ENCODE measurements at regions of chr9 and their contacts with region 1.

Region 1: GRCh38 chr9:76810377-76810957 is 46.2 kb downstream of the PCA3 start:
- DNase-seq: peak in 2 of 6 donors; percentile 4 to 54
- ATAC-seq: peak in 3 of 4 donors; percentile 85 to 87 (median 85)
- H3K4me3 ChIP-seq: no peak overlapping the region
- H3K27ac ChIP-seq: no peak overlapping the region
- H3K4me1 ChIP-seq: no peaks in the 10 kb centered on the region
- H3K27me3 ChIP-seq: peaks cover 0 to 3% (median 0%) of the 10 kb centered on the region in 4 donors
- CTCF ChIP-seq: peak; percentile 29 to 68 (median 58)

Region 2: GRCh38 chr9:76699971-76700370 is 110.5 kb before region 1 on chr9:
- intact Hi-C with region 1: no loop called
- DNase-seq: no peak
- ATAC-seq: no peak
- H3K4me3 ChIP-seq: no peak overlapping the region
- H3K27ac ChIP-seq: no peak overlapping the region
- H3K4me1 ChIP-seq: no peaks in the 10 kb centered on the region
- H3K27me3 ChIP-seq: peaks cover 0 to 3% (median 2%) of the 10 kb centered on the region in 4 donors
- CTCF ChIP-seq: no peak

Region 3: DNA sequence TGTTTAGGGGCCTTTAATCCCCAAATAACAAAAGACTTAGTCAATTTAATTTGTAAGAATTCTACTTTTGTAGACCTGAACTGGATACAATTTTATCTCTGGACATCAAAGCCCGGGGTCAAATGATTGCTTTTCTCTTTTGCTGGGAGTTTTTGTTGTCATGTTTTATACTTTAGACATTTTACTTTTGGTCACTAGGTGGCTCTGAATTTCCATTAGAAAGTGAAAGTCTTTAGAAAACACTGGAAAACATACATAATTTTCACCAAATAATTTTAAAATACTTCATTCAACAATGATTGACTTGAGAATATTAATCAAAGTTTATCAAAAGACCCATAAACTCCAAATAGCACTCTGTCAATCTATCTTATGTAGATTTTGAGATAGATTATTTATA is 49.0 kb before region 1 on chr9:
- intact Hi-C with region 1: no loop called
- DNase-seq: no peak
- ATAC-seq: no peak
- H3K4me3 ChIP-seq: no peak overlapping the region
- H3K27ac ChIP-seq: no peak overlapping the region
- H3K4me1 ChIP-seq: no peaks in the 10 kb centered on the region
- H3K27me3 ChIP-seq: no peaks in the 10 kb centered on the region
- CTCF ChIP-seq: no peak

Region 4: GRCh38 chr9:76873056-76873792 is 62.8 kb after region 1 on chr9:
- intact Hi-C with region 1: no loop called
- DNase-seq: no peak
- ATAC-seq: no peak
- H3K4me3 ChIP-seq: no peak overlapping the region
- H3K27ac ChIP-seq: no peak overlapping the region
- H3K4me1 ChIP-seq: no peaks in the 10 kb centered on the region
- H3K27me3 ChIP-seq: no peaks in the 10 kb centered on the region
- CTCF ChIP-seq: no peak

Region 5: DNA sequence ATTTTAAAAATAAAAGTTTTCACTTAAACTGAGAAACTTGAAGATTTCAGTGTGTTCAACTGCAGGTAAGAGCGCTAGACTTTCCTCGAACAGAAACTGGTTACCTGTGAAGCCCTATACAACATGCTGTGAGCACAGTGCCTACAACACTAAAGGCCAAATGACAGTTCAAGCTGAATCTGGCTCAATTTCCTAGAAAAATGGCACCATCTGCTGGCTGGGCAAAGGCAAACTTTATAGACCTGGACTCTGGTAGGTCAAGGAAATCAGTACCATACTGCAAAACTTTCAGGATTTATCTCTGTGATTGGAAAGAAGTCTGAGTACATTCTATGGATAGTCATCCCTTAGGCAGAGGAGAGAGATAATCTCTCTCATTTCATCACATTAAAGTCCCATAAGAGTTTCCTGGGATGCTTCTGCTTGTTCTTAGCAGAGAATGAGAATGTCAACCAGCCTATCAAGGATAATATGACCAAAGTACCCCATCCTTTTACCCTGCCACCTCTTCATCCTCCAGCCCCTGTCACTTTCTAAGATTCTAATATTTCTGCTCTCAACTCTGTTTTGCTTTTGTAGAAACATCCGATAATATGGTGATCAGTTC is 177.2 kb after region 1 on chr9:
- intact Hi-C with region 1: loop called in 1 of 3 experiments (anchors 5 kb)
- DNase-seq: peak in 1 of 6 donors; percentile 32
- ATAC-seq: peak in 3 of 4 donors; percentile 73 to 74 (median 74)
- H3K4me3 ChIP-seq: no peak overlapping the region
- H3K27ac ChIP-seq: no peak overlapping the region
- H3K4me1 ChIP-seq: no peaks in the 10 kb centered on the region
- H3K27me3 ChIP-seq: peaks cover 0 to 3% (median 0%) of the 10 kb centered on the region in 4 donors
- CTCF ChIP-seq: no peak

Region 6: DNA sequence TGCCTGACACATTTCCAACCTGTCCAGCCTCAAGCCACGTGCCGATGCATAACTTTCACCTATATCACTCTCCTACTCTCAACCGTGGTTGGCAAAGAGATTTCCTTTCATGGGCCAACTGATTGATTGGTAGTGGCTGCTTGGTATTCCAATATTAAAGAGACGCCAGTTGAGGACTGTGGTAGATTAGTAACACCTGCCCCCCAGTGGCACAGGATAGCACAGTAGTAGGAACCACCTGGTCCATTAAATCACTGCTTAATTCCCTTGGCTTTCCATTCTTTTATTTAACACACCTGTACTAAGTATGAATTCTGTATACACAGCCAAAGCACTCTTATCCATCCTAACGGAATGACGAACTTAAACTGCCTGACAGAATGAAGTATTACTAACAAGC is 189.9 kb after region 1 on chr9:
- intact Hi-C with region 1: loop called in 1 of 3 experiments (anchors 5 kb)
- DNase-seq: no peak
- ATAC-seq: no peak
- H3K4me3 ChIP-seq: no peak overlapping the region
- H3K27ac ChIP-seq: no peak overlapping the region
- H3K4me1 ChIP-seq: no peaks in the 10 kb centered on the region
- H3K27me3 ChIP-seq: no peaks in the 10 kb centered on the region
- CTCF ChIP-seq: no peak